ENCODE measurements at regions of chr19 and their contacts with region 1.

Region 1: GRCh38 chr19:18259893-18260292 is 14.4 kb downstream of the IQCN start:
- DNase-seq: no peak
- ATAC-seq: no peak

Region 2: GRCh38 chr19:18214779-18215433 is 45.0 kb before region 1 on chr19:
- intact Hi-C with region 1: loop called in 1 of 2 experiments (anchors 10 kb)
- DNase-seq: no peak
- ATAC-seq: no peak